Cardiac septum (tissue), 1 donor: ENCODE measurements at regions of chr13 and their contacts with region 1.

Region 1: DNA sequence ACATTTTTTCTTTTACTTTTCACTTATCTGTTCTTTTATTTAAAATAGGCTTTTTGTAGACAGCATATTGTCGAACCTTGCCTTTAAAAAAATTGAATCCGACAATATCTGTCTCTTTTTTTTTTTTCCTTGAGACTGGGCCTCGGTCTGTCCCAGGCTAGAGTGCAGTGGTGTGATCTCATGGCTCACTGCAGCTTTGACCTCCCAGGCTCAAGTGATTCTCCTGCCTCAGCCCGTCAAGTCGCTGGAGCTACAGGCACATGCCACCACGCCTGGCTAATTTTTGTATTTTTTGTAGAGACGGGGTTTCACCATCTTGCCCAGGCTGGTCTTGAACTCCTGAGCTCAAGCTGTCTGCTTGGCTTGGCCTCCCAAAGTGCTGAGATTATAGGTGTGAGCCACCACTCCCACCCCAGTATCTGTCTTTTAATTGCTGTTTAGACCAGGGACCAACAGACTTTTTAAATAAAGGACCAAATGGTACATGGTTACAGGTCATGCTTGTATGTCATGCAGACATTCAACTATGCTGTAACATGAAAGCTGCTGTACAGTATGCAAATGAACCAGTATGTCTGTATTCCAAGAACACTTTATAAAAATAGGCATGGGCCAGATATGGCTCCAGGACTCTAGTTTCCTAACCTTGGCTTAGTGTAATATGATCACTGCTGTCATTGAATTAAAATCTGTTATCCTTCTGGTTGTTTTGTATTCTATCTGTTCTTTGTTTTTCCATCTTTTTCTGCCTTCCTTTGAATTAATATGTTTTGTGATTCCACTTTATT is 80.3 kb downstream of the GJA3 start:
- DNase-seq: no peak

Region 2: DNA sequence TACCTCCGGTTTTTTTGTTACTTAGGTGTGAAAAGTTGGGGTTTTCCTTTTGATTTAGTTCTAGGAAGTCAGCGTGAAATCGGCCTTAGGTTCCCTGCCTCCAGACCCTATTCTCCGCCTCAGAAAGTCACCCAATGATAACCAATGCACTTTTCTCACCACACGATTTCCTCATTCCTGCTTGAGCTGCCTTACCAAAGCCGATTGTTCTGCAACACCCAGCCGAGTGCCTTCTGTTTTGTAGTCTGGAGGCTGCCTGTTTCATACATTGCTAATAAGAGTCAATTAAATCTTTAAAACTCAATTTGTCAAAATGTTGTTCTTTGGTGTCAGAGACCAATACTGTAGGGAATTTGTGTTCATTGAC is 40.6 kb after region 1 on chr13:
- intact Hi-C with region 1: loop called (anchors 5 kb)
- DNase-seq: no peak